Naive thymus-derived CD4-positive, alpha-beta T cell (primary cell): ENCODE measurements at regions of chr10 and their contacts with region 1.

Region 1: GRCh38 chr10:119396346-119397071 is 146.0 kb downstream of the RGS10 start:
- DNase-seq: no peak
- ATAC-seq: no peak
- H3K4me3 ChIP-seq: no peak overlapping the region
- H3K4me3 Mint-ChIP-seq: no peak overlapping the region
- H3K27ac ChIP-seq: no peak overlapping the region
- H3K27ac Mint-ChIP-seq: peak overlapping the region in 4 of 9 donors; percentile 20 to 62 (median 40)
- H3K4me1 ChIP-seq: no peaks in the 10 kb centered on the region
- H3K4me1 Mint-ChIP-seq: peaks cover 11 to 25% (median 13%) of the 10 kb centered on the region in 7 donors
- H3K27me3 ChIP-seq: no peaks in the 10 kb centered on the region
- H3K27me3 Mint-ChIP-seq: no peaks in the 10 kb centered on the region

Region 2: DNA sequence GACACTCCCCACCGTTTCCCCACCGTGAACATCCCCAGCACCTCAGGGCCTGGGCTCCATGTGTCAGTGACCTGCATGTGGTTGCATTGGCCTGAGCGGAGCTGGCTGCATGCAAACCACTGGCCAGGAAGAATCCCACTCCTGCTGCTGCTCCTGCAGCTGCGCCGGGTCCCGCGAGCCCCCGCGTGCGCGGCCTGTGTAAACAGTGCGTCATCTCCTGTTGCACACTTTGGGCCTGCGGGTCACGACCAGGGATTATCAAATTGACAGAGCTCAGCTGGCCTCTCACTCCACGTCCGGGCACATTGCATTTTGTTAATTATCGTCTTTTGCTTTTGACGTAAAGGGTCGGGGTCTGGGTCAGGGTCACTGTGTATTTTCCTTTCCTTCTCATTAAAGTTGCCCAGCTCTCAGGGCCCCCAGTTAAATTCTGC is 13.4 kb after region 1 on chr10:
- CTCF ChIA-PET with region 1: no interaction called
- POLR2A ChIA-PET with region 1: no interaction called
- intact Hi-C with region 1: loop called in 1 of 2 experiments (anchors 2 kb)
- DNase-seq: no peak
- ATAC-seq: no peak
- H3K4me3 ChIP-seq: no peak overlapping the region
- H3K4me3 Mint-ChIP-seq: no peak overlapping the region
- H3K27ac ChIP-seq: no peak overlapping the region
- H3K27ac Mint-ChIP-seq: no peak overlapping the region
- H3K4me1 ChIP-seq: no peaks in the 10 kb centered on the region
- H3K4me1 Mint-ChIP-seq: peaks cover 0 to 6% (median 4%) of the 10 kb centered on the region in 7 donors
- H3K27me3 ChIP-seq: no peaks in the 10 kb centered on the region
- H3K27me3 Mint-ChIP-seq: no peaks in the 10 kb centered on the region